Esophagus muscularis mucosa (tissue), 4 donors: ENCODE measurements at regions of chr6 and their contacts with region 1.

Region 1: DNA sequence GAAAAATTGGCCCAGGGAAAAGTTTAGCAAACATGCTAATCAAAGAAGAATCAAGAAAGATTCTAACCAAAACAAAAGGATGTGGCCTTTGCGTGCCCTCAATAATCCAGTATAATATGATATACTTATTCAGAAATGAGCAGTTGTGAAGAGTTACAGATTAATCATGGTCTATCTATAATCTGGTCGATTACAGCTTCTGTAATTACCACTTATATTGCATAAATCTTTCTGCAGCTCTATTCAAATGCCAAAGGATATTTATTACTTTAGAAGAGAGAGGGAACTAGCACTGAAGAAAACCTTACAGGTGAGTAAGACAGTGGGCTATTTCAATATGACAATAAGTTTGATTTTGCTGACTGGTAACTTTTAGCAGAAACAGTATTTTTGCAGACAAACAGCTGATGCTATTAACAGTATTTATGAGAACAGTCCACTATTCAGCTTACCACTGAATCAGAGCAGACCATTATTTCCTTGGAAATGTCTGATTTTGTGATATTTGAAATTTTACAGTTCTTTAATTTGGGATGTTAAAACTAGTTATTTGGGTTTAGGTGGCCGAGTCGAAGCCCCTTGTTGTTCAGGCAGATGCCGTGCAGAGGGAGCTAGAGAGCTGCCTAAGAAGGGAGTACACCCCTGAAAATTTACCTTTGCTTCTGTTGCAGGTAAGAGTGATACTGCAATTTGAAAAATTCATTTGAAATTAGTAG is 92.2 kb downstream of the CEP57L1 start:
- DNase-seq: no peak
- H3K4me3 ChIP-seq: no peak overlapping the region
- H3K27ac ChIP-seq: no peak overlapping the region
- H3K4me1 ChIP-seq: peaks cover 0 to 10% (median 5%) of the 10 kb centered on the region in 4 donors
- H3K27me3 ChIP-seq: no peaks in the 10 kb centered on the region
- CTCF ChIP-seq: peak; percentile 88 to 95 (median 94)
- EP300 ChIP-seq: no peak
- POLR2A ChIP-seq: no peak

Region 2: GRCh38 chr6:109397020-109397419 is 209.5 kb after region 1 on chr6:
- intact Hi-C with region 1: loop called (anchors 5 kb)
- DNase-seq: no peak
- H3K4me3 ChIP-seq: no peak overlapping the region
- H3K27ac ChIP-seq: no peak overlapping the region
- H3K4me1 ChIP-seq: no peaks in the 10 kb centered on the region
- H3K27me3 ChIP-seq: no peaks in the 10 kb centered on the region
- CTCF ChIP-seq: peak; percentile 31 to 48 (median 44)
- EP300 ChIP-seq: no peak
- POLR2A ChIP-seq: no peak